ENCODE measurements at regions of chr6 and their contacts with region 1.

Region 1: DNA sequence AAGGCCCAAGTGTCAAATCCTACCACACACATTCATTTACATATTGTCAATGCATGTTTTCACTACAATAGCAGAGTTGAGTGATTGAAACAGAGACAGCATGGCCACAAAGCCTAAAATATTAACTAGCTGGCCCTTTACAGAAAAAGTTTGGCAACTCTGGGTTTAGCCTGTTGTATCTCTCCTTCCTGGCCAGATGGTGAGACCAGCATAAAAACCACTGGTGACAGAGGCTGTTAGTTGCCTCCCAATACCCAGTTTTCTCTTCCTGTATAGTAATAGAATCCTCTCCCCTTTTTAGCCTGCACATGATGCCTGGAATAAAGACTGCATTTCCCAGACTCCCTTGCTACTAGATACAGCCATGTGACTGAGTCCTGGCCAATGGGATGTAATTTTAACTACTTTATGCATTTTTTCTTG is 100.0 kb upstream of the TAB2 start:
- DNase-seq: no peak
- H3K4me3 Mint-ChIP-seq: no peak overlapping the region
- H3K27ac Mint-ChIP-seq: no peak overlapping the region
- H3K4me1 Mint-ChIP-seq: peaks cover 33% of the 10 kb centered on the region
- H3K27me3 Mint-ChIP-seq: no peaks in the 10 kb centered on the region

Region 2: GRCh38 chr6:149182262-149182661 is 35.2 kb before region 1 on chr6:
- CTCF ChIA-PET with region 1: no interaction called
- POLR2A ChIA-PET with region 1: no interaction called
- DNase-seq: no peak
- H3K4me3 Mint-ChIP-seq: no peak overlapping the region
- H3K27ac Mint-ChIP-seq: no peak overlapping the region
- H3K4me1 Mint-ChIP-seq: peaks cover 1% of the 10 kb centered on the region
- H3K27me3 Mint-ChIP-seq: no peaks in the 10 kb centered on the region

Region 3: DNA sequence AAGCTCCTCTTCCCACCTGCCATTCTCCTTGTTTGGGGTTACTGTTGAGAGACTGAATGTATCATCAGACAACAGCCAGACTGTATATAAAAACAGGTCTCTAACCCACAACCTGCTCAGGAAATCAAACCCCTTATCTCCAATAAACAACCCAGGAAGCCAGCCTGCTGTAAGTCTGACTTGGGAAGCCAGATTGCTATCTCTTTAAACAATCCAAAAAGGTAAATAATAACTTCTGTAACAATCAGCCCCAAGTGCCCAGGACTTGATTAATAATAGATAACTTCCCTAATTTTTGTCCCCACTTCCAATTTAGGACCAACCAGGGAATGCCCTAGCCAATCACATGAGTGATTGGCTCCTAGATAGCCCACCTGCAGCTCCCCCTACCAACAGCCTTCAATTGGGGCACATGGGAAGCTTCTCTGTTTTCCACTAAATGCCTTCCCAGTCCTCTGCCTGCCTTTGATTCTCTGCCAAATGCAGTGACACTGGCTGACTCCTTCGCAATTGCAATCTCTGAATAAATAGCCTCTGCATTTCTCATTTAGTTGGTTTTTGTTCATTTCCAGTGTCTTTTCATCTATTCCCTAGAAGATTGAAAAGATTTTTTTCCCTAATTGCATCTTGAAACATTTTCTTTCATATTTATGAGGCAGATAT is 17.1 kb before region 1 on chr6:
- CTCF ChIA-PET with region 1: interaction called, 11 read pairs
- POLR2A ChIA-PET with region 1: interaction called, 3 read pairs
- DNase-seq: no peak
- H3K4me3 Mint-ChIP-seq: no peak overlapping the region
- H3K27ac Mint-ChIP-seq: no peak overlapping the region
- H3K4me1 Mint-ChIP-seq: peaks cover 19% of the 10 kb centered on the region
- H3K27me3 Mint-ChIP-seq: no peaks in the 10 kb centered on the region

Region 4: DNA sequence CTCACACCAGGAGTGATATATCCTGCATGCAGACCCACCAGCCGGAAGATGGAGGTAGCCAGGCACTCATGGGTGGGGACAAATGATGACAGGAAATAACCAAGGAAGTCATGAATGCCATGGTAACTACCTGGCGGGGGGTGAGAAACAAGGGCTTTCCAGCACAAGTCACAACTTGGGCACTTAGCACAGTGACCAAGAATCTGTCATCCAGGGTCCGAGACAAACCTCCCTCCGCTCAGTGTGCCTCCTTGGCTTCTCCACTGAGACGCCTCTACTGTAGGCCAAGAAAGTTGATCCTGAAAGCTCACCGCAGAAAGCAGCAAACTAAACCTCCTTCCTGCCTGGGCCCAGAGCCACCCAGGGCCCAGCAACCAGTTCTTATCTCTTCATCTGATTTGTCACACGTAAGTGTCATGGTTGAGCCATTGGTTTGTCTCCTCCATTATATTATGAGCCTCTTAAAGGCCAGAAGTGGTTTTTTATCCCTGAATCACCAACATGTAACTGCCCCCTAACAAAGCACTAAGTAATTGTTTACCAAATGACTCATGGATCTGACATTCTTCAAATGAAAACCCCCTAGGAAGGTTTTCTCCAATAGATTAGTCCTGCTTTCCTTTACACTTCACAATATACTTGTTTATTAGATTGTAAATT is 15.7 kb after region 1 on chr6:
- CTCF ChIA-PET with region 1: interaction called, 50 read pairs
- POLR2A ChIA-PET with region 1: interaction called, 3 read pairs
- DNase-seq: peak; percentile 59
- H3K4me3 Mint-ChIP-seq: peak overlapping the region; percentile 66
- H3K27ac Mint-ChIP-seq: peak overlapping the region; percentile 92
- H3K4me1 Mint-ChIP-seq: peaks cover 52% of the 10 kb centered on the region
- H3K27me3 Mint-ChIP-seq: no peaks in the 10 kb centered on the region